ENCODE measurements at regions of chr11 and their contacts with region 1.

Region 1: GRCh38 chr11:111230122-111230465 is 15.4 kb upstream of the POU2AF2 start:
- DNase-seq: no peak
- H3K4me3 ChIP-seq: peak overlapping the region in 1 of 3 experiments; percentile 47
- H3K27ac ChIP-seq: no peak overlapping the region
- H3K4me1 ChIP-seq: no peaks in the 10 kb centered on the region
- H3K27me3 ChIP-seq: no peaks in the 10 kb centered on the region
- CTCF ChIP-seq: no peak

Region 2: DNA sequence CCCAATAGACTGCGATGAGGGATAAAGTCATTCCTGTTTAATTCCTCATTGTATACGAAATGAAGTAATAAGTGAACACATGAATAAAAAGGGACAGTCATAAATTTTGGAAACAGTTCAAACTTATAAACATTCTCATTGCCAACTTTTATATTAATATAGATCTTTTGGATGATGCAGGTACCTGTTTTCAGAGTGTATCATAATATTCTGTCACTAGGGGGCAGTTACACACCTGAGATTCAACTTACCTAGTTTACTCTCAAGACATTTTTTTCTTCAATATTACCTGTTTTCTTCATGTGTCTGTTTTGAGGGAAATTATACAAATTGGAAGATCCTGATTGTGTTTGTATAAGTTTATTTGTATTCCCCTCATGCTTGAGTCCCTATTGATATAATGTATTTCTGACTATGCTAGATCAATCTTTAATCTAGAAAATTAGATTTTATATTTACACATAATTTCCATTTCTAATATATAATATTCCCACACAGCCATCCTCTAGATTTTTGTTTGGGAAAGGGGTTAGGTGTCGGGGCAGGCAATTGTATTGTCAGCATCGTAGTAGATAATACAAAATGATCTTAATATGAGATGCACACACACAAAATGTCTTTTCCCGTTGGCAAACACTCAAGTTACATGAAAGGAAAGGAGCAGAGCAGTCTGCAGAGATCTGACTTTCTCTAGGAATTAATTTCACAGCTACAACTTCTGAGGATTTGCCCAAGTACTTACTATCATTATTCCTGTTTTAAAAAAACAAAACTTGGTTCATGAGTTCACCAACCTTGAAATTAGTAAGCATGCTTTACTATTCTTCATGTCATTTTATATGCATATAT is 782.0 kb before region 1 on chr11:
- CTCF ChIA-PET with region 1: no interaction called
- dilution Hi-C with region 1: no loop called
- in situ Hi-C with region 1: loop called (anchors 5 to 10 kb)
- intact Hi-C with region 1: loop called (anchors 1 kb)
- DNase-seq: peak; percentile 21
- H3K4me3 ChIP-seq: no peak overlapping the region
- H3K27ac ChIP-seq: no peak overlapping the region
- H3K4me1 ChIP-seq: no peaks in the 10 kb centered on the region
- H3K27me3 ChIP-seq: no peaks in the 10 kb centered on the region
- CTCF ChIP-seq: peak; percentile 57 to 60

Region 3: DNA sequence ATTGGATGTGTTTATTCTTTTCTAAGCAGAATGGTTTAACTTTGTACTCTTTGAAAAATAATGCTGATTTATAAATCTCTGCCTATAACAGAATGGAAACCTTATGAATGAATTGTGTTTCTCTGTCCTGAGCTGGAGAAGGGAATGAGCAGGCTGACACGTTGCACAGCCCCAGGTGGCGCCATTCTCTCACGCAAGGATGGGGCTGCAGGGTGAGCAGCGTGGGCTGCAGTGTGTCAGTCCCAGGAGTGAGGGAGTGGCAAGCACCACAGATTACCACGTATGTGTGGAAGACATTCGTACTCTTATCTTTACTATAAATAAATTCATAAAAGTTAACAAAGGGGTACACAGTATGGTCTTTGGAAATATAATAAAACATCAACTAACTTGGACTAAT is 766.9 kb before region 1 on chr11:
- CTCF ChIA-PET with region 1: no interaction called
- dilution Hi-C with region 1: no loop called
- in situ Hi-C with region 1: no loop called
- intact Hi-C with region 1: loop called (anchors 1 kb)
- DNase-seq: no peak
- H3K4me3 ChIP-seq: no peak overlapping the region
- H3K27ac ChIP-seq: no peak overlapping the region
- H3K4me1 ChIP-seq: no peaks in the 10 kb centered on the region
- H3K27me3 ChIP-seq: no peaks in the 10 kb centered on the region
- CTCF ChIP-seq: peak; percentile 39 to 67

Region 4: DNA sequence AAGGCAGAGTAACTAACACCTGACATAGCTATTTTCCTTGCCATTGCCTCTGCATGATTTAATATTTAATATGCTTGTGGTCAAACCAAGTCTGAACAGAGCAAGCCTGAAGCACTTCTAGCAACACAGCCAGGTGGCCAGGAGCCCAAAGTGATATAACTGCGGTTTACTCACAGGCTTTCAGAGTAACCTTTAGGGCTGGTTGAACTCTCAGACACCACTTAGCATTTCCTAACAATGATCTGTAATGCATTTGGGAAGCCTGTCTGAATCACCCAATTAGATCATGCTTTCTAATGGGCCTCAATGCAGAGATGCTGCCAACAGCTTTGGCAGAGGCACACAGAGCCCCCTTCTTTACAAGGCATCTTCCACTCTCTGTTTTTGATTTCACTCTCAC is 704.2 kb before region 1 on chr11:
- CTCF ChIA-PET with region 1: no interaction called
- dilution Hi-C with region 1: no loop called
- in situ Hi-C with region 1: no loop called
- intact Hi-C with region 1: loop called (anchors 5 kb)
- DNase-seq: peak; percentile 97
- H3K4me3 ChIP-seq: no peak overlapping the region
- H3K27ac ChIP-seq: peak overlapping the region; percentile 17
- H3K4me1 ChIP-seq: peaks cover 17% of the 10 kb centered on the region
- H3K27me3 ChIP-seq: no peaks in the 10 kb centered on the region
- CTCF ChIP-seq: no peak

Region 5: GRCh38 chr11:110711776-110712658 is 518.1 kb before region 1 on chr11 and contains the start of gene ARHGAP20:
- CTCF ChIA-PET with region 1: no interaction called
- dilution Hi-C with region 1: no loop called
- in situ Hi-C with region 1: no loop called
- intact Hi-C with region 1: loop called (anchors 1 kb)
- DNase-seq: peak; percentile 28
- H3K4me3 ChIP-seq: peak within 1 kb of the TSS; percentile 20 to 26 (median 23)
- H3K27ac ChIP-seq: no peak within 1 kb of the TSS
- H3K4me1 ChIP-seq: peaks cover 14% of the 10 kb centered on the region
- H3K27me3 ChIP-seq: peaks cover 59% of the 10 kb centered on the region
- CTCF ChIP-seq: no peak
- total RNA-seq, gene ARHGAP20: 0.17 TPM in 1 of 2 donors, not detected in the other

Region 6: GRCh38 chr11:110774138-110775014 is 455.7 kb before region 1 on chr11:
- CTCF ChIA-PET with region 1: no interaction called
- dilution Hi-C with region 1: no loop called
- in situ Hi-C with region 1: no loop called
- intact Hi-C with region 1: loop called (anchors 2 kb)
- DNase-seq: peak; percentile 7
- H3K4me3 ChIP-seq: no peak overlapping the region
- H3K27ac ChIP-seq: no peak overlapping the region
- H3K4me1 ChIP-seq: no peaks in the 10 kb centered on the region
- H3K27me3 ChIP-seq: no peaks in the 10 kb centered on the region
- CTCF ChIP-seq: no peak

Region 7: DNA sequence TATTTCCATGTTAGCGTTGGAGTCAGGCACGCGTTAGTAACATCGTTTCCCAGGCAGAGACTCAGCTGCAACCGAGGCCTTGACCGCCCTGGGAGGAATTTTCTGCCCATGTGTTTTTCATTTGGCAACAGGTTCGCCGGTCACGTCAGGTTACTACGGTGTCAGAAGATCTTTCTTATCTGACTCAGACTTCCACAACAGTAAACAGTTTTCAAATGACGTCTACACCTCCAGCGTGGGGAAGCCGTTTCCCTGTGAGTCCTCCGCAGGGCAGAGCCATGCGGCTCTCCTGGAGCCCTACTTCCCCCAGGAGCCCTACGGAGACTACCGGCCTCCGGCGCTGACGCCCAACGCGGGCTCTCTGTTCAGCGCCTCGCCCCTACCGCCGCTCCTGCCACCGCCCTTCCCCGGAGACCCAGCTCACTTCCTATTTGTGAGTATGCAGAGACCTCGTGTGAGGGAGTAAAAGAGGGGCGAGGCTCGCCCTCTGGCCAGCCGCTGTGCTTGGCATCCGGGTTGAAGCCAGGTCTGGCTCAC is 53.9 kb after region 1 on chr11:
- CTCF ChIA-PET with region 1: no interaction called
- dilution Hi-C with region 1: no loop called
- in situ Hi-C with region 1: no loop called
- intact Hi-C with region 1: no loop called
- DNase-seq: no peak
- H3K4me3 ChIP-seq: no peak overlapping the region
- H3K27ac ChIP-seq: no peak overlapping the region
- H3K4me1 ChIP-seq: no peaks in the 10 kb centered on the region
- H3K27me3 ChIP-seq: peaks cover 6% of the 10 kb centered on the region
- CTCF ChIP-seq: no peak